HEK293 (cell line): ENCODE measurements at regions of chrX and their contacts with region 1.

Region 1: GRCh38 chrX:138026211-138026610 is 460.3 kb downstream of the ZIC3 start:
- H3K4me3 ChIP-seq: no peak overlapping the region
- H3K27ac ChIP-seq: no peak overlapping the region
- H3K4me1 ChIP-seq: no peaks in the 10 kb centered on the region
- CTCF ChIP-seq: no peak

Region 2: DNA sequence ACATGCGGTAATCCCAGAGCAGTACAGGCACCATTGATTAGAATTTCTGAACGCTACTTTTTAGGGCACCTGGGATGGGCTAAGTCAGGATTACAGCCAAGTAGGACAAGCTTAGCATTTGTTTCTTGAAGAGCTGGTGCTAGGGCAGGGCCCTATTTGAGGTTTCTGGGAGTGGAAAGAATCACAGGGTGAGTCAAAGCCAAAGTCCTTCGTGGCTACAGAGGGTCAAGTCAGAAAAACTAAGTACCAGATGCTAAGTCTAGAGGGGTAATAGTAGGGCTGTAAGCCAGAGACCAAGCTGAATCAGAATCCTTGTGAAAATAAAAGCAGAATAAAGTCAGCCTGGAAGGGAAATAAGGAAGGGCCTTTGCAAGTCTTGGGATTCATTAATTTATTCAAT is 11.6 kb before region 1 on chrX:
- CTCF ChIA-PET with region 1: interaction called, 13 read pairs
- POLR2A ChIA-PET with region 1: no interaction called
- H3K4me3 ChIP-seq: no peak overlapping the region
- H3K27ac ChIP-seq: no peak overlapping the region
- H3K4me1 ChIP-seq: no peaks in the 10 kb centered on the region
- CTCF ChIP-seq: no peak

Region 3: GRCh38 chrX:138127314-138127713 is 101.1 kb after region 1 on chrX:
- CTCF ChIA-PET with region 1: no interaction called
- POLR2A ChIA-PET with region 1: no interaction called
- H3K4me3 ChIP-seq: no peak overlapping the region
- H3K27ac ChIP-seq: no peak overlapping the region
- H3K4me1 ChIP-seq: no peaks in the 10 kb centered on the region
- CTCF ChIP-seq: no peak